Activated T-helper 1 cell treated with anti-CD3 and anti-CD28 coated beads, Interleukin-12 subunit alpha, Interleukin-12 subunit beta, Interleukin-2, Interleukin-4 antibody, amounts not matched to agents 30 ng/mL and 10 ng/mL and 1 ng/mL, durations not matched to agents 14 hours and 24 hours and 36 hours (primary cell): ENCODE measurements at regions of chr14 and their contacts with region 1.

Region 1: GRCh38 chr14:72893636-72894321 is at the start of gene DPF3:
- DNase-seq: peak; percentile 93
- H3K4me3 Mint-ChIP-seq: peak within 1 kb of the TSS; percentile 95
- H3K27ac Mint-ChIP-seq: peak within 1 kb of the TSS; percentile 86
- H3K4me1 Mint-ChIP-seq: peaks cover 29% of the 10 kb centered on the region
- H3K27me3 Mint-ChIP-seq: peaks cover 51% of the 10 kb centered on the region
- total RNA-seq, gene DPF3: 2.8 and 4.3 TPM in 2 replicates

Region 2: DNA sequence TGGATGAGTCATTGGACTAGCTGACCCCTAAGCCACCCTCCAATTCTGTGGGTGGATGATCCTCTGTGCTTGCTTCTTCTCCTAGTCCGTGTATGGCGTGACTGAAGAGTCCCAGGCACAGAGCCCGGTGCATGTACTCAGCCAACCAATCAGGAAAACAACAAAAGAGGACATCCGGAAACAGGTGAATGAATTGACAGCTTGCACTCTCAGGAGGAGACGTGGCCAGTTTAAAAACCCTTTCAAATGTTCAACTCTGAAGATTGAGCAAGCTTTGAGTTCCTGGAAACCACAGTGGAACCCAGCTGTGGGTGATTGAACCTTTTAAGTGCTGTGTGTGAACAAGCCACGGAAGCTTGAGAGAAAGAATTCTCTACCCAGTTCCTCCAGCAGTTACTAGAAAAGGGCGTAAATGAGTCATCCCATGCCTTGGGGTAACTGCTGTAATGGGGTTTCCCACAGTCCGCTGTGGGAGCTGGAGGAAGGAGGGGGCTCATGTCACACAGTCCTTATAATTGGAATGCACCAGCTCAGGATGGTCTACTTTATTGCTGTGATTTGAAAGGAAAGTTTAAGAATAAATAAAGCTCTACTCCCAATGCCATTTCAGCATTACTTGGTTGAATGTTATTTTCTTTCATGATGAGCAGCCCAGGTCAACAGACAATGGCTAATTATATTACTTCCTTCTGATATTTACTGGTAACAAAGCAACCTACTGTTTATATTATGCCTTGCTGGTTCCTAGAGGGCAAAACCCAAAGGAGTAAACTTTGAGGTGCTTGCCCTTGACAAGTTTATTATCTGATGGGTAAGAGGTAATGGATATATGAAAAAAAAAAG is 416.9 kb before region 1 on chr14:
- intact Hi-C with region 1: loop called (anchors 1 kb)
- DNase-seq: peak; percentile 81
- H3K4me3 Mint-ChIP-seq: peak overlapping the region; percentile 53
- H3K27ac Mint-ChIP-seq: peak overlapping the region; percentile 87
- H3K4me1 Mint-ChIP-seq: peaks cover 80% of the 10 kb centered on the region
- H3K27me3 Mint-ChIP-seq: no peaks in the 10 kb centered on the region

Region 3: GRCh38 chr14:72714094-72714493 is 179.7 kb before region 1 on chr14:
- intact Hi-C with region 1: loop called (anchors 5 kb)
- DNase-seq: peak; percentile 55
- H3K4me3 Mint-ChIP-seq: peak overlapping the region; percentile 40
- H3K27ac Mint-ChIP-seq: peak overlapping the region; percentile 36
- H3K4me1 Mint-ChIP-seq: peaks cover 37% of the 10 kb centered on the region
- H3K27me3 Mint-ChIP-seq: no peaks in the 10 kb centered on the region

Region 4: DNA sequence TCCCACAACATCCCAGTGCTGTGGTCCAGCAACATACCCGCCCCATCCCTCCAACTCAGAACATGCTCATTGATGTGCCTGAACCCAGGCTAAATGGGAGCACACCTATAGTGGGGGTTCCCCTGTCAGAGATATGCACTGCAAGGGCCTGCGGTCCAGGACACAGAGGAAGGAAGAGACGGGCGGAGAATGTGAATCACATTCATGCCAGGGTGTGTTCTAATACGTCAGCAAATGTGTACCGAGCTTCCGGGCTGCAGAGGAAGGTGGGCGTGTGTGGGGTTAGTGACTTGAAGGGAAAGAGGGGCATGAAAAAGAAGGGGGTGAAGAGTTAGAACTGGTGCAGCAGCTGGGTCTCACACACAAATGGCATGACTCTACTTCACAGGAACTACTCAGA is 83.6 kb before region 1 on chr14:
- intact Hi-C with region 1: loop called (anchors 2 kb)
- DNase-seq: peak; percentile 57
- H3K4me3 Mint-ChIP-seq: peak overlapping the region; percentile 48
- H3K27ac Mint-ChIP-seq: peak overlapping the region; percentile 92
- H3K4me1 Mint-ChIP-seq: peaks cover 31% of the 10 kb centered on the region
- H3K27me3 Mint-ChIP-seq: peaks cover 3% of the 10 kb centered on the region

Region 5: DNA sequence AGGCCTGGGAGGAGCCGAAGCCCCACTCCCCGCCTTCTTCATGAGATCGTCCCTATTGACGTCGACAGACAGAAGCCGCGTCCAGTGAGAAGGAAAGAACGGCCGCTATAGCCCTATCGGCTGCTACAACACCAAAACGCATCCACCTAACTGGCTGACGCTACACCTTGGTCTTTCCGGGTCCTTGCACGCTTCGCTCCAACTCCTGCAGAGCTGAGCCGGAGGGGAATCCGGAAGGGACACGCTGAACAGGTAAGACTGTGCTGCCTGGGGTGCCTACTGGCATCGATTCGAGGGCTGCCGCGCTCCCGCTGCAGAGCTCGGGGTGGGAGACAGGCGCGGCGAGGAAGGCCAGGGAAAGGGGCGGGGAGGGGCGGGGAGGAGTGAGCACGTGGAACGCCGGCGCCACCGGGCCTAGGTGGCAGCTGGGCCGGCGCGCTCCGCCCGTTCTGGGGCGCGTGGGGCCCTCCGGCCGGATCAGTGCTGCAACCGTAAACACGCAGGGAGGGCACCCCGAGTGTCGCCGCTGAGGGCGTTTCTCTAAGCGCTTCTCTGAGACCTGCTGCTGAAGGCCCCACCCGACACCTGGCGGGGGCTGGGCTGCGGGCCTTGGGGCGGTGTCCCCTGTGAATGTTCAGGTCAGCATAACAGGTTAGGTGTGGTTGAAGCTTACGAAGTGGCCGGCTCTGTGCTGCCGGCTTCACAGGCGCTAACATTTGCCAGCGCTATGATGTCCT is 32.7 kb after region 1 on chr14 and contains the start of gene DCAF4:
- intact Hi-C with region 1: loop called (anchors 1 kb)
- DNase-seq: peak; percentile 94
- H3K4me3 Mint-ChIP-seq: peak within 1 kb of the TSS; percentile 90
- H3K27ac Mint-ChIP-seq: peak within 1 kb of the TSS; percentile 95
- H3K4me1 Mint-ChIP-seq: peaks cover 8% of the 10 kb centered on the region
- H3K27me3 Mint-ChIP-seq: peaks cover 16% of the 10 kb centered on the region
- total RNA-seq, gene DCAF4: 17.1 and 20.4 TPM in 2 replicates